T-cell (primary cell): ENCODE measurements at regions of chr19 and their contacts with region 1.

Region 1: GRCh38 chr19:45770192-45771101 is 1.4 kb upstream of the SIX5 start:
- DNase-seq: peak; percentile 78 to 94 (median 88)
- ATAC-seq: peak; percentile 73 to 80 (median 76)
- H3K4me3 ChIP-seq: peak overlapping the region; percentile 83 to 85
- H3K4me3 Mint-ChIP-seq: peak overlapping the region; percentile 81 to 90 (median 84)
- H3K27ac ChIP-seq: peak overlapping the region; percentile 18
- H3K27ac Mint-ChIP-seq: peak overlapping the region; percentile 76 to 86
- H3K4me1 ChIP-seq: peaks cover 2 to 35% of the 10 kb centered on the region in 2 experiments
- H3K4me1 Mint-ChIP-seq: peaks cover 9 to 20% (median 11%) of the 10 kb centered on the region in 3 donors
- H3K27me3 ChIP-seq: peaks cover 0 to 38% of the 10 kb centered on the region in 2 experiments
- H3K27me3 Mint-ChIP-seq: peaks cover 4 to 11% of the 10 kb centered on the region in 2 donors

Region 2: DNA sequence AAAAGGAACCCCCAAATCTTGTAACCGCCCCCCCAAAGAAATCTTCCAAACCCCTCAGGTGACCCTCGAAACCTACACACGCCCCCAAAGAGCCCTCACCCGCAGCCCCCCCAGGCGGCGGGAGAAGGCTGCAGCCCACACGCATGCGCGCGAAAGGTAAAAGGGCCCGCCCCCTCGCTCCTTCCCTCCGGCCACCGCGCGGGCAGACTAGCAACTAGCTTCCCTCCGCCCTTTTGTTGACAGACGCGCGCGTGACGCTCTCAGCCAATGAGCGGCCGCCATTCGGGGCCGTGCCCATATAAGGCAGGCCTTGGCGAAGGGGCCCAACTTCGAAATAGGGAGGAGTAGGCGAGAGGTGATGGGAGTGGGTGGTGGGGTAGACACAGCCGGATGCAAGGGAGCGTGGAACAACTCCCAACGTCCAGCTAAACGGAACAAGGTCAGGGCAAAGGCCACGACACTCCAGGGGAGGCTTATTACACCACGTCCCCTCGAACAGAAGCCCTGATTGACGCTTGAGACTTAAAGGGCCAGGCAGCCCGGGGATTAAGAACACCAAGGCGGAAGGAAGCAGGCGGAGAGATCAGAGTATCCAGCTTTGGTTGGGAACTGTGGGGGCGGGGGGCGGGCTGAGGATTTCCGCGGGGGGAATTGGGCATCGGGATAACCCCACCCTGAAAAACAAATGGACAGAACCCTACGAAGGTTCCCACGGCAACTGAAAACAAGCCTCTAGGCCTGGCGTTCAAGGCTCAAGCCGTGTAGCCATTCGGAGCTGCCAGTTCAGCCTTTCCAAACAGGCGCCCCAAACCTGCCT is 53.1 kb before region 1 on chr19:
- CTCF ChIA-PET with region 1: interaction called in 1 of 2 experiments, 14 read pairs
- POLR2A ChIA-PET with region 1: interaction called in 1 of 2 experiments, 3 read pairs
- DNase-seq: peak; percentile 93 to 99 (median 97)
- ATAC-seq: peak; percentile 94 to 96 (median 94)
- H3K4me3 ChIP-seq: peak overlapping the region; percentile 73 to 82
- H3K4me3 Mint-ChIP-seq: peak overlapping the region; percentile 93 to 98 (median 96)
- H3K27ac ChIP-seq: peak overlapping the region; percentile 88
- H3K27ac Mint-ChIP-seq: peak overlapping the region; percentile 98
- H3K4me1 ChIP-seq: peaks cover 13 to 34% of the 10 kb centered on the region in 2 experiments
- H3K4me1 Mint-ChIP-seq: peaks cover 42 to 47% (median 47%) of the 10 kb centered on the region in 3 donors
- H3K27me3 ChIP-seq: no peaks in the 10 kb centered on the region
- H3K27me3 Mint-ChIP-seq: no peaks in the 10 kb centered on the region

Region 3: DNA sequence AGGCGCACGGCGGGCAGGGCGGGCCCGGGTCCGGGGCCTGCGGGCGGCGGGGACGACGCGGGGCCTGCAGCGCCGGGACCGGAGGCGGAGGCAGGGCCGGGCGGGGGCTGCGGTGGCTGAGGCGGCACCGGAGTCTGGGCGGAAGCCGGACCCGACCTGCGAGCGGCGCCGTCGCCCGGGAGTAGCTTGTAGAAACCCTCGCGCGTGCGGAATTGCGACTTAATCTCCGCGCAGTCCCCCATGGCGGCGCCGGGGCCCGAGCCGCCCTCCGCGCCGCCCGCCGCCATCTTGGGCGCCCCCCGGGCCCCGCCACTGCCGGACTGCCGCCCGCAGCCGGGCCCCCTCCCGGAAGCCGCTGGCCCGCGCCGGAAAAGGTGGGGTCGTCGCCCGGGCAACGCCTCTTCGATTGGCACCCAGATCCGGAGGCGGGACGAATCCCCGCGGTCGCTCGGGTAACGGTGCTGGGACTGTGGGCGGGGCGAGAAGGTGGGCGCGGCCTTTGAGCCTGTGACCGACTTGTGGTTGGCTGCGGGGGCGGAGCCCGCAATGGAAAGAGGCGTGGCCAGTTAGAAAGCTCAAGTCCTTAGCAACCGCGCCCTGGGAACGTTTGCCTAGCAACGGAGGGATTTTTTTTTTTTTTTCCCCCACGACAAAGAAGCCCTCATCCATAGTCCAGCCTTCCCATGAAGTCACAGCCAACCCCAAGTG is 22.2 kb after region 1 on chr19 and contains the start of gene DMWD:
- CTCF ChIA-PET with region 1: interaction called in 1 of 2 experiments, 61 read pairs
- POLR2A ChIA-PET with region 1: interaction called, 6 to 7 read pairs
- DNase-seq: peak; percentile 95 to 100 (median 99)
- ATAC-seq: peak; percentile 94 to 95 (median 95)
- H3K4me3 ChIP-seq: peak within 1 kb of the TSS; percentile 58 to 64
- H3K4me3 Mint-ChIP-seq: peak within 1 kb of the TSS; percentile 80 to 87 (median 85)
- H3K27ac ChIP-seq: peak within 1 kb of the TSS; percentile 44
- H3K27ac Mint-ChIP-seq: peak within 1 kb of the TSS; percentile 68 to 71
- H3K4me1 ChIP-seq: peaks cover 23 to 35% of the 10 kb centered on the region in 2 experiments
- H3K4me1 Mint-ChIP-seq: peaks cover 31 to 56% (median 42%) of the 10 kb centered on the region in 3 donors
- H3K27me3 ChIP-seq: peaks cover 9 to 44% of the 10 kb centered on the region in 2 experiments
- H3K27me3 Mint-ChIP-seq: peaks cover 13 to 35% of the 10 kb centered on the region in 2 donors
- total RNA-seq, gene DMWD: 28.4 to 53.3 (median 44.6) TPM

Region 4: DNA sequence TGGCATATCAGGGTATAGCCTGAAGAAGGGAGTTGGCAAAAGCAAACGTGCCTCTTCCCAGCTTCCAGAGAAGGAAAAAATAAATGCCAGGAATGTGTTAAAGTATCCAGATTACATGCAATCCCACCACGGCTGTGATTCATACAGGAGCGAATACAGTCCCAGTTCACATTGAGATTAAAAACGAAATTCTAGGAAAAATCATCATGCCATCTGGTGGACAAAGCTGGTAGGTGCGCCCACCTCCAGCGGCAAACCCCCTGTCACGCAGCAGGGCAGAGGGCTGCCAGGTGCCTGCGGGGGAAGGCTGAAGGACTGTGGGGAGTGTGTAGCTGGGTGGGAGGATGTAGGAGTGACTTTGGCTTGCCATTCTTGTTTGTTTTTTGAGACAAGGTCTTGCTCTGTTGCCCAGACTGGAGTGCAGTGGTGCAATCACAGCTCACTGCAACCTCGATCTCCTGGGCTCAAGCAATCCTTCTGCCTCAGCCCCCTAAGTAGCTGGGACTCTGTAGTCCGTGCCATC is 28.6 kb after region 1 on chr19:
- CTCF ChIA-PET with region 1: interaction called, 9 to 61 read pairs
- POLR2A ChIA-PET with region 1: interaction called in 1 of 2 experiments, 6 read pairs
- DNase-seq: peak in 33 of 35 experiments; percentile 16 to 80 (median 47)
- ATAC-seq: peak; percentile 66 to 97 (median 78)
- H3K4me3 ChIP-seq: no peak overlapping the region
- H3K4me3 Mint-ChIP-seq: no peak overlapping the region
- H3K27ac ChIP-seq: no peak overlapping the region
- H3K27ac Mint-ChIP-seq: no peak overlapping the region
- H3K4me1 ChIP-seq: peaks cover 0 to 7% of the 10 kb centered on the region in 2 experiments
- H3K4me1 Mint-ChIP-seq: peaks cover 5 to 12% (median 9%) of the 10 kb centered on the region in 3 donors
- H3K27me3 ChIP-seq: peaks cover 2 to 74% of the 10 kb centered on the region in 2 experiments
- H3K27me3 Mint-ChIP-seq: peaks cover 30 to 52% of the 10 kb centered on the region in 2 donors

Region 5: GRCh38 chr19:45834970-45835369 is 64.5 kb after region 1 on chr19:
- CTCF ChIA-PET with region 1: no interaction called
- POLR2A ChIA-PET with region 1: no interaction called
- DNase-seq: no peak
- ATAC-seq: no peak
- H3K4me3 ChIP-seq: no peak overlapping the region
- H3K4me3 Mint-ChIP-seq: no peak overlapping the region
- H3K27ac ChIP-seq: no peak overlapping the region
- H3K27ac Mint-ChIP-seq: no peak overlapping the region
- H3K4me1 ChIP-seq: no peaks in the 10 kb centered on the region
- H3K4me1 Mint-ChIP-seq: peaks cover 0 to 4% (median 0%) of the 10 kb centered on the region in 3 donors
- H3K27me3 ChIP-seq: no peaks in the 10 kb centered on the region
- H3K27me3 Mint-ChIP-seq: no peaks in the 10 kb centered on the region

Region 6: DNA sequence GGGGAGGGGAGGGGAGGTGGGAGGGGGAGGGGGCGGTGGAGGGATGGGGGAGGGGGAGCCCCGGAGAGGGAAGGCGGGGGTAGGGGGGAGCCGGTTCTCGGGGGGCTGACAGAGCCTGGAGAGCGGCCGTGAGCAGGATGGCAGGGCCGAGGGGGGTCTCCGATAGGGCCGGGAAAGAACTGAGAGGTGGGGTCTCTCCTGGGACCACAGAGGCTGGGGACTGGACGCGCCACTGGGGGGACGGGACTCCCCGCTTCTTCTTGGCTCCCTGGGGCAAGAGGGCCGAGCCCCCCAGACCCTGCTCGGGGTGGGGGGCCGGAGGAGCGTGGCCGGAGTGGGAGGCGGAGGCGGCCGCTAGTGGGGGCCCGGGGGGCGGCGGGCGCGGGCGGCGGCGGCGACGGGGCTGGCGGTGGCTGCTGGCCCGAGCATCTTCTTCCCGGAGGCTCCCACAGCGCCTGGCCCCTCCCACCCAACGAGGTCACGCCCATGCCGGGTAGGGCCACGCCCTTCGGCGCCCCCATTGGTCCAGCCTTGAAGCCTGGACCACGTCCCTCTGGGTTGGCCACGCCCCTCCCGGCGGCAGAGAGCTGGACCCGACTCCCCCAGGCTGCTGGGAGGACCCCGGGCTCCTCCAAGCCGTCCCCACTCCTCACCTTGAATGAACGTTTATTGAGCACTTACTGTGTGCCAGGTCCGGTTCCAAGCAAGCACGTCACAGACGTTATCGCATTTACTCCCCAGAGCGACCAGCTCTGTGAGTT is 203.3 kb after region 1 on chr19 and contains the start of gene NOVA2:
- CTCF ChIA-PET with region 1: no interaction called
- POLR2A ChIA-PET with region 1: no interaction called
- DNase-seq: peak in 2 of 35 experiments; percentile 25 to 30
- ATAC-seq: no peak
- H3K4me3 ChIP-seq: no peak within 1 kb of the TSS
- H3K4me3 Mint-ChIP-seq: peak within 1 kb of the TSS; percentile 43 to 63 (median 44)
- H3K27ac ChIP-seq: no peak within 1 kb of the TSS
- H3K27ac Mint-ChIP-seq: peak within 1 kb of the TSS in 1 of 2 donors; percentile 36
- H3K4me1 ChIP-seq: peaks cover 2 to 28% of the 10 kb centered on the region in 2 experiments
- H3K4me1 Mint-ChIP-seq: peaks cover 20 to 21% (median 21%) of the 10 kb centered on the region in 3 donors
- H3K27me3 ChIP-seq: peaks cover 23 to 82% of the 10 kb centered on the region in 2 experiments
- H3K27me3 Mint-ChIP-seq: peaks cover 66 to 79% of the 10 kb centered on the region in 2 donors
- total RNA-seq, gene NOVA2: 0.03 TPM in 1 of 5 donors, not detected in the others